Activated CD4-positive, alpha-beta T cell treated with anti-CD3 and anti-CD28 coated beads for 36 hours (primary cell): ENCODE measurements at regions of chr17 and their contacts with region 1.

Region 1: DNA sequence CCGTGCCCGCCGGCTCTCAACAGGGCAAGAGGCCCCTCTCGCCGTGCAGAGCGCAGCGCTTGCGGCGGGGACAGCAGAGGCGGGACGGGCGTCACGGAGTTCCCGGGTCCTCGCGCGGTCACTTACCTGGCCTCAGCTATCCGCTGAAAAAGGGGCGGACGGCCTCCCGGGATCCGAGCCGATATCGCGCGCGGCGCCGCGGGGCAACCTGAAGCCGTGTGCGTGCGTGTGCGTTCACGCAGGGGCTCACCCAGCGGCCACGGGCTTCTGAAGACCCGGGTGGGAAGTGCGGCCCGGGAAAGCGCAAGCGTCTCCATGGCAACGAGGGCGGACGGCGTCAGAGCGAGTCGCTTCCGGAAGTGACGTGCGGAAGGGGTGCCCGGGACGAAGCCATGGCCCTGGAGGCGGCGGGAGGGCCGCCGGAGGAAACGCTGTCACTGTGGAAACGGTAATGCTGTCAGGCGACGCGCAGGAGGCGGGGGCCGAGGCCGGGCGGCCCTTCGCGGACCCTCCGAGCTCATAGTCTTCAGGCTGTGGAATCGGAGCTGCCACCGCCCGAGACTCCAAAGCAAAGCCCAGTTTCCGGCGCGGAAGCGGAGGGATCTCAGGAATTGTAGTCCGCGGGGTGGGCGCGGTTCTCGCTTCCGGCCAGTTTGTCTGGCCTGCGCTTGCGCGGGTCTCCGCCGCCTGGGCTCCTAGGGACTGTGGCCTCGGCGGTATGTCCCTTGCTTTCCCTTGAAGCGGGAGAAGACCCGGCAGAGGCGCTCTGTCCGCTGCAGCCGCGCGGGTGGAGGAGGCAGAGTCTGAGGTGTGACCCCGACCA is at the start of gene ENDOV:
- DNase-seq: peak; percentile 95
- ATAC-seq: peak; percentile 96
- H3K4me3 Mint-ChIP-seq: peak within 1 kb of the TSS; percentile 81
- H3K27ac Mint-ChIP-seq: peak within 1 kb of the TSS; percentile 8
- H3K4me1 Mint-ChIP-seq: peaks cover 23% of the 10 kb centered on the region
- H3K27me3 Mint-ChIP-seq: peaks cover 16% of the 10 kb centered on the region
- total RNA-seq, gene ENDOV: 12.3 to 13.0 TPM

Region 2: DNA sequence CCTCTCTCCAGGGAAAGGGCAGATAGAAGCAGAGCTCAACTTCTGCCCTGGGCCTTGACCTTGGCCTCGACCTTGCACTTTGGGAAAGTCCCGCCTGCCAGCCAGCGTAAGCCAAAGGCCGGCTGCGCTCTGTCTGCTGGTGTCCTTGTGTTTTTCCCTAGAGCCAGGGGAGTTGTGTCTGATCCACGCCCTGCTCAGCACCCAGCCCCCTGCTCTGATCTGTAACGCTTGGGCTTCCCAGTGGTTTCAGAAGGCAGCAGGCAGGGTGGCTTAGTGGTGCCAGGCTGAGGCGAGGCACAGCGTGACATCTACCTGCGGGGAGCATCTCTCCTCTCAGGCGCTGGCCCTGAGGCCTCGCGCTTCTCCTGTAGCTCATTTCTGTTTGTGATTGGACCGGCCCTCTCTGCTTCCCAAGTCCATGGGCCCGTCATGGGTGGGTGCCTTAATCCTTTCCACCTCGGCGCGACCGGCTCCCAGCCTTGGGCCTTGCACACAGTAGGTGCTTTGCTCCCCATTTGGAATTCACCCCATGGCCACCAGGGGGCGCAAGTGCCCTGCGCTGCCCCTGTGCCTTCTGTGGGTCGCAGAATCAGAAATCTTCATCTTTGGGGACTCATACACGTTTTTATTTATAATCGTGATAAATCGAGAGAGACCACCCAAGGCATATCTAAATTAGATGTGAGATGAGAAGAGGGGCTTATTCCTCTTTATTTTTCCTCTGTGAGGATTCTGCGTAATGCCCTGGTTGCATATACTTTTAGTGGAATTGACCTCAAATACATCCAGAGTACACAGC is 219.1 kb before region 1 on chr17:
- CTCF ChIA-PET with region 1: no interaction called
- POLR2A ChIA-PET with region 1: no interaction called
- intact Hi-C with region 1: loop called in 1 of 2 experiments (anchors 1 kb)
- DNase-seq: peak; percentile 74
- ATAC-seq: peak; percentile 53
- H3K4me3 Mint-ChIP-seq: no peak overlapping the region
- H3K27ac Mint-ChIP-seq: no peak overlapping the region
- H3K4me1 Mint-ChIP-seq: no peaks in the 10 kb centered on the region
- H3K27me3 Mint-ChIP-seq: peaks cover 3% of the 10 kb centered on the region

Region 3: DNA sequence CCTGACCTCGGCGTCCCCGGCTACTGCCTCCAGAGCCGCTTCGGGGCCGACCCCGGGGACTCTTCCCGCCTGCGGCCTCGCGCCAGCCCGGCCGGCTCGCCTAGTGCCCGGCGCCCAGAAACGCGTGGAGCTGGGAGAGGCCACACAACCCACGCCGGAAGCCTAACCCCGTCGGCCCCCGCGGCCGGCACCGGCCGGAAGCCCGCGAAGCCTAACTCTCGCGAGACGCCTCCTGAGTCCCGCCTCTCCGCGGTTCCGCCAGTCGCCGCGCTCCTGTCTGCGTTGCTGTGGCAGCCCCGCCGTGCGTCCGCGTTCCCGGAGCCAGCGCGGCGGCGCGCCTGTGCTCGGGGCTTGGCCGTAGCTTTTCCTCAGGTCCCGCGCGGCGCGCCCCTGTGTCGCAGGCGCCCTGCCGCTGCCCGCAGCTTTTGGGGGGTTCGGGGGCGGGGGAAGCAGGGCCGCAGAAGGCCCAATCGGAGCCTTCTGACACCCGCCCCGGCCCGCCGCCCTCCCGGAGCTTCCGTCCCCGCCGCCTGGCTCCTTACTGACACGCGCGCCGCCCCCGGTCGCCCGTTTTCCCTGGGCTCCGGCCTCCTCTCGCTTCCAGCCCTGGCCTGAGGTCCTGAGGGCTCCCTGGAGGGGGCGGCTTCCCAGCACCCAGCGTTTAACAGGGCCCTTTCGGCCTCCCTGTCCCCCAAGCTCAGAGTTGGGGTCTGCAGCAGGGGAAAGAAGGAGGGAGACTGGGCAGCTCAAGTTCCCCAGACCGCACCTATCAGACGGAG is 39.7 kb after region 1 on chr17:
- CTCF ChIA-PET with region 1: no interaction called
- POLR2A ChIA-PET with region 1: no interaction called
- intact Hi-C with region 1: loop called in 1 of 2 experiments (anchors 1 kb)
- DNase-seq: peak; percentile 98
- ATAC-seq: peak; percentile 93
- H3K4me3 Mint-ChIP-seq: peak overlapping the region; percentile 99
- H3K27ac Mint-ChIP-seq: peak overlapping the region; percentile 94
- H3K4me1 Mint-ChIP-seq: peaks cover 23% of the 10 kb centered on the region
- H3K27me3 Mint-ChIP-seq: peaks cover 13% of the 10 kb centered on the region

Region 4: GRCh38 chr17:80544655-80545498 is 129.9 kb after region 1 on chr17 and contains the start of gene RPTOR:
- CTCF ChIA-PET with region 1: interaction called, 3 read pairs
- POLR2A ChIA-PET with region 1: no interaction called
- intact Hi-C with region 1: loop called in 1 of 2 experiments (anchors 2 kb)
- DNase-seq: peak; percentile 95
- ATAC-seq: peak; percentile 98
- H3K4me3 Mint-ChIP-seq: peak within 1 kb of the TSS; percentile 89
- H3K27ac Mint-ChIP-seq: peak within 1 kb of the TSS; percentile 91
- H3K4me1 Mint-ChIP-seq: peaks cover 32% of the 10 kb centered on the region
- H3K27me3 Mint-ChIP-seq: peaks cover 9% of the 10 kb centered on the region
- total RNA-seq, gene RPTOR: 48.6 to 58.1 TPM

Region 5: DNA sequence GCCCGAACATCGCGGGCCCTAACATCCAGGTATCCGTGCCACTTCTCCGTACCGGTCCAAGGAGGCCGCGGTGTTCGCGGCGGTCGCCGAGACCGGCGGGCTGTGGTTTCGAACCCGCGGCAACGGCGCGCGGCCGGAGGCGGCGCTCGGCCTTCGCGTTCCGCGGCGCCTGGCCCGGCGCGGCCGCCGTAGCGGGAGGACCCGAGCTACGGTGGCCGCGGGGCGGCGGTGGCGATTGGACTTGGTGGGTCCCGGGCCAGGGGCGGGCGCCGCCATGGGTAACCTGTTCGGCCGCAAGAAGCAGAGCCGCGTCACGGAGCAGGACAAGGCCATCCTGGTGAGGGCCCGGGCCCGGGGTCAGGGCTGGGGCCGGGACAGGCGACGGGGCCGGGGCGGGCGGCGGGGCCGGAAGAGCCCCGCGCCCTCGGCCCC is 576.6 kb after region 1 on chr17 and contains the start of gene CHMP6:
- CTCF ChIA-PET with region 1: no interaction called
- POLR2A ChIA-PET with region 1: no interaction called
- intact Hi-C with region 1: loop called in 1 of 2 experiments (anchors 1 kb)
- DNase-seq: peak; percentile 83
- ATAC-seq: peak; percentile 49
- H3K4me3 Mint-ChIP-seq: peak within 1 kb of the TSS; percentile 69
- H3K27ac Mint-ChIP-seq: peak within 1 kb of the TSS; percentile 74
- H3K4me1 Mint-ChIP-seq: peaks cover 21% of the 10 kb centered on the region
- H3K27me3 Mint-ChIP-seq: peaks cover 3% of the 10 kb centered on the region
- total RNA-seq, gene CHMP6: 15.9 to 19.4 TPM